ENCODE measurements at regions of chr10 and their contacts with region 1.

Region 1: DNA sequence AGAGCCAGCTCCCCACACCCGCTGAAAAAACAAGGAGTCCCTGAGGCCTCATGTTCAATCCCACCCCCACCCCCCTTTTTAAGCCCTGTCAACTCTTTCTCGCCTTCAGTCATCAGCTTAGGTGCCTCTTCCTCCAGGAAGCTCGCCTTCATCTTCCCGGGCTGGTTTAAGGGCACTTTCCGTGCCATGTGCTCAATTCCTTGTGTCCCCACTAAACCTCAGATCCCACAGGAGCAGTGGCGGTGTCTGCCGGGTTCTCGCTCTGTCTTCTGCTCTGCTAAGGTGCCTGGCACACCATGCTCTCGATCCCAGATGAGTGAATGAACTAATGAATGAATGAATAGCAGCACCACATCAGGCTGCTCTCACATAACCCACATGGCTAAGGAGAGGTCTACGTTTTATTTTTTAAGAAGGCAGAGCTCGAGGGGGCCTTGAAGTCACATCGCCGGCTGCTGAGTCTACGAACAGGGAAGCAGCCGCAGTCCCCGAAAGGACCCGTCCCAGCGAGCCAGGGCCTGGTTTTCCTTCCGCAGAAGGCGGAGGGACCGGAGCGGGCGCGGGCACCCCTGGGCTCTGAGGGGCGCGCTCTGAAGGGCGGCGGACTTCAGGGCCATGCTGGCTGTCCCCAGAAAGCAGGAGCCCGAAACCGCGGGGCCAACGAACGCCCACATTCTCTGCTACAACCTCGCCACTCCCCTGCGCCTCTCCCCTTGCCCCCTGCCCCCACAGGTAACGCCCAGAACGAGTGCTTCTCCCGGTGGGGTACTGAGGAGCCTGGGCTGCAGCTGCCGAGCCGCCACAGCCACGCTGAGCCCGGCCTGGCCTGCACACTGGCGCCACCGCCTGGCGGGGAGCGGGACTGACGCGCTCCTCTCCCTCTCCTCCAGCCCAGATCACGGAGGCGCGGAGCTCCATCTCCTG is 73.4 kb upstream of the KCNMA1 start:
- DNase-seq: peak; percentile 73
- H3K4me3 ChIP-seq: peak overlapping the region; percentile 14 to 41 (median 38)
- H3K27ac ChIP-seq: no peak overlapping the region
- H3K4me1 ChIP-seq: peaks cover 3% of the 10 kb centered on the region
- H3K27me3 ChIP-seq: no peaks in the 10 kb centered on the region
- CTCF ChIP-seq: peak; percentile 98 to 100
- POLR2A ChIP-seq: no peak

Region 2: DNA sequence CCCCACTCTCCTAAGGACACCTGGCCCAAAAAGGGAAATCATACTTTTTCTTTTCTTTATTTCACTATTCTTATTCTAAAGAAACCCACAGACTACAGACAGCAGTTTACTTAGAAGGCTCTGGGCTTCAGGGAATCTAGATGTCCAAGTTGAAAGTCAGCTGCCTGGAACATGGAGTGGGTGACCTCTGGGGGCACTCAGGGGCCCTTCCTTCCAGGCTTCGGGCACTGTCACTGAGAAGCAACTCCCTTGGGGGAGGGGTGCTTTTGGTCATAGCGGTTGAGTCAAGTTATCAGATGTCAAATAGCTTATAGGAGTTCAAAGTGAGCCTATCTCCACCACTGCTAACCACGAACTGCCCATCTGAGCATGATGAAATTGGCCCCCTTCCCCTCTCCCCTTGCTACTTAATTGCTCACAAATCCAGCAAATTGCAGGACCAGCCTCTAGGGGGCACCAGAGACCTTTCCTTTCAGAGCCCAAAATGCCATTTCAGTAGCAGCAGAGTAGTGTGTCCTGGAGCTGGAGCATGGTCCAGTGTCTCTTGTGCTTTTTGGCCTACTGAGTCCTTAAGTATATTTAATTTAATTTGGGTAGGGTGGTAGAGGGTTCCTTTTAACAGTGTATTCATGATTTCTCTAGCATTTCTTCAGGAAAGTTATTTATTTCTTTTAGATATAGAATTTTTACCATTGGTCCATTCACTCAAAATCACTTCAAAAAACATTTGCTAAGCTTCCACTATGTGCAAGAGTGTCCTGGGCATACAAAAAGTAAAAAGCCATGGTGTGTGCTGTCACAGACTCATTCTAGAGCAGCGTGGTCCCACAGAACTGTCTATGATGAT is 537.2 kb before region 1 on chr10:
- CTCF ChIA-PET with region 1: interaction called, 101 read pairs
- POLR2A ChIA-PET with region 1: no interaction called
- dilution Hi-C with region 1: no loop called
- intact Hi-C with region 1: loop called (anchors 1 kb)
- DNase-seq: peak; percentile 75
- H3K4me3 ChIP-seq: no peak overlapping the region
- H3K27ac ChIP-seq: no peak overlapping the region
- H3K4me1 ChIP-seq: peaks cover under 1% of the 10 kb centered on the region
- H3K27me3 ChIP-seq: no peaks in the 10 kb centered on the region
- CTCF ChIP-seq: peak; percentile 86 to 90
- POLR2A ChIP-seq: no peak

Region 3: GRCh38 chr10:77333610-77334340 is 377.2 kb before region 1 on chr10:
- CTCF ChIA-PET with region 1: no interaction called
- POLR2A ChIA-PET with region 1: no interaction called
- dilution Hi-C with region 1: no loop called
- intact Hi-C with region 1: no loop called
- DNase-seq: no peak
- H3K4me3 ChIP-seq: no peak overlapping the region
- H3K27ac ChIP-seq: no peak overlapping the region
- H3K4me1 ChIP-seq: no peaks in the 10 kb centered on the region
- H3K27me3 ChIP-seq: peaks cover 0 to 4% of the 10 kb centered on the region in 2 experiments
- CTCF ChIP-seq: no peak
- POLR2A ChIP-seq: no peak

Region 4: DNA sequence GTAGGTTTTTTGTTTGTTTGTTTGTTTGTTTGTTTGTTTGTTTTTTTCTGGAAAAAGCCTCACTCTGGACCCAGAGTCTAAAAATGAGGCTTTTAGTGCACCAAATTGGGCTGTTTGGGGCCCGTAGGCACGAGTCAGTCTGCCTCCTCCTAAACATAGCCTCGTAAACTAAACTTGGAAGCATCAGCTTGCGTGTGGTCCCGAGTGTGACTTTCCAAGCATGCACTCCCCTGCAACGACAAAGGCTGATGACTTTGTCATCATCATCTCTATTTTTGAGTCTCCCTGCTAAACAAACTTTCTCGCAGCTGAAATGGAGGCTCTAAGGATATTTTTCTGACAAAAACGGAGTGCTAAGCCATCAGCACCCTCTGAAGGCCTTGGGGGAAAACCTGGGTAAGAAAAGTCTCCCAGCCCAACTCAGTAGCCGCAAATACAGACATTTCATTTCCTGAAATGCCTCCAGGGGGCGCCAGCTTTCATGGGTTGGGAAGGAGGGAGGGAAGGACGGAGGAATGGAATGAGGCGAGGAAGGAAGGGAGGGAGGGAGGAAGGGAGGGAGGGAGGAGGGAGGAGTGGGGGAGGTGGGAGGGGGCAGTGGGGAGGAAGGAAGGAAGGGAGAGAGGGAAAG is 319.3 kb before region 1 on chr10:
- CTCF ChIA-PET with region 1: interaction called, 3 read pairs
- POLR2A ChIA-PET with region 1: no interaction called
- dilution Hi-C with region 1: no loop called
- intact Hi-C with region 1: loop called (anchors 5 kb)
- DNase-seq: peak; percentile 63
- H3K4me3 ChIP-seq: no peak overlapping the region
- H3K27ac ChIP-seq: peak overlapping the region; percentile 90
- H3K4me1 ChIP-seq: peaks cover 48% of the 10 kb centered on the region
- H3K27me3 ChIP-seq: no peaks in the 10 kb centered on the region
- CTCF ChIP-seq: peak; percentile 56 to 57
- POLR2A ChIP-seq: no peak

Region 5: GRCh38 chr10:77649333-77650331 is 61.4 kb before region 1 on chr10:
- CTCF ChIA-PET with region 1: interaction called, 25 read pairs
- POLR2A ChIA-PET with region 1: interaction called, 3 read pairs
- dilution Hi-C with region 1: no loop called
- intact Hi-C with region 1: loop called (anchors 2 kb)
- DNase-seq: no peak
- H3K4me3 ChIP-seq: no peak overlapping the region
- H3K27ac ChIP-seq: no peak overlapping the region
- H3K4me1 ChIP-seq: no peaks in the 10 kb centered on the region
- H3K27me3 ChIP-seq: peaks cover 3 to 21% of the 10 kb centered on the region in 2 experiments
- CTCF ChIP-seq: no peak
- POLR2A ChIP-seq: no peak

Region 6: DNA sequence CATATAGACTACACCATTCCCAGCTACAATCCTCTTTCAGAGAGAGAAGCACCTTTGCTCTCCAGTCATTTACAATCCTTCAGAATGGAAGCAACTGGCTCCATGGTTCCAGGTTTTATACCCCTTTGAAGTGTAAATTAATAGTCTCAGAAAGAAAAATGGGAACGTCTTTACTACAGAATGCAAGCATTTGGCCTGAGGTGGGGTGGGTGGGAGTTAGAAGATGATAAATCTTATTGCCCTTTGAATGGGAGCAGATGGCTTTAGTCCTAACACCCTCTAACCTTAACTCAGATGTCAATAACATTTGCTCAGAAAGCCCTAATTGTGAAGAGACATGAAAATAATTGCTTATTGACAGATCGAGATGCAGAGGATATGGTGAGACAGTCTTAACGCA is 10.8 kb after region 1 on chr10:
- CTCF ChIA-PET with region 1: interaction called, 22 read pairs
- POLR2A ChIA-PET with region 1: no interaction called
- dilution Hi-C with region 1: no loop called
- intact Hi-C with region 1: no loop called
- DNase-seq: no peak
- H3K4me3 ChIP-seq: no peak overlapping the region
- H3K27ac ChIP-seq: no peak overlapping the region
- H3K4me1 ChIP-seq: peaks cover 5% of the 10 kb centered on the region
- H3K27me3 ChIP-seq: no peaks in the 10 kb centered on the region
- CTCF ChIP-seq: no peak
- POLR2A ChIP-seq: no peak

Region 7: GRCh38 chr10:77756319-77757232 is 45.6 kb after region 1 on chr10:
- CTCF ChIA-PET with region 1: interaction called, 317 read pairs
- POLR2A ChIA-PET with region 1: no interaction called
- dilution Hi-C with region 1: no loop called
- intact Hi-C with region 1: loop called (anchors 1 kb)
- DNase-seq: peak; percentile 78
- H3K4me3 ChIP-seq: no peak overlapping the region
- H3K27ac ChIP-seq: no peak overlapping the region
- H3K4me1 ChIP-seq: peaks cover 3% of the 10 kb centered on the region
- H3K27me3 ChIP-seq: no peaks in the 10 kb centered on the region
- CTCF ChIP-seq: peak; percentile 78 to 84
- POLR2A ChIP-seq: no peak

Measured in endothelial cell of umbilical vein (primary cell).